Psoas muscle (tissue), 8 donors: ENCODE measurements at regions of chr5 and their contacts with region 1.

Region 1: DNA sequence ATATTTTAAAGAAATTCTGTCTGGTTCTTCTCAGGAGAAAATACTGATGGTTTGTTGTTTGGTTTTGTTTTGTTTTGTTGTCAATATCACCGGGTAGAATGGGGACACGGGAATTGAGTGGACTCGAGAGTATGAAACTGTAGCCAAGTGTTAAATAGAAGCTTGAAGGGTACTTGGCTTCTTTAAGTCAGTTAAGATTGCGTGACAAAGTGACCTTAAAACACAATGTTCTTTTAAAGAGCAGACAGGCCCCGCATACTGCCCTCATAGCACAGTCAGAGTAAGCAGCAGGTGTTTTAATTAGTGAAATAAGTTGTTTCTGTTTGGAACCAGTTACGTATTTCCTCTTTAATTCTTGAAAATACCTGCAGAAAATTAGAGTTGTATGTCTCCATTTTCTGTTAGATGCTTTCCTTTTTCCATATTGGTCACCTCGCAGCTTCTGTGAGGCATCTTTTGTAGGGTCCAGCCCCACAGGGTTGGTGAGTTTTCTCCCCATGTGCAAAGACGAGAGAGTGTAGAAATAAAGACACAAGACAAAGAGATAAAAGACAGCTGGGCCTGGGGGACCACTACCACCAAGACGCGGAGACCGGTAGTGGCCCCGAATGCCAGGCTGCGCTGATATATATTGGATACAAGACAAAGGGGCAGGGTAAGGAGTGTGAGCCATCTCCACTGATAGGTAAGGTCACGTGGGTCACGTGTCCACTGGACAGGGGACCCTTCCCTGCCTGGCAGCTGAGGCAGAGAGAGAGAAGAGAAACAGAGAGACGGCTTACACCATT is 9.6 kb downstream of the TRIP13 start:
- DNase-seq: no peak
- ATAC-seq: no peak
- H3K4me3 ChIP-seq: no peak overlapping the region
- H3K27ac ChIP-seq: peak overlapping the region; percentile 21
- H3K4me1 ChIP-seq: no peaks in the 10 kb centered on the region
- H3K27me3 ChIP-seq: no peaks in the 10 kb centered on the region
- CTCF ChIP-seq: no peak

Region 2: GRCh38 chr5:442335-443238 is 459.7 kb before region 1 on chr5 and contains the start of gene EXOC3:
- intact Hi-C with region 1: loop called in 1 of 2 experiments (anchors 10 kb)
- DNase-seq: peak; percentile 79 to 88
- ATAC-seq: peak; percentile 89 to 98 (median 96)
- H3K4me3 ChIP-seq: peak within 1 kb of the TSS; percentile 88
- H3K27ac ChIP-seq: peak within 1 kb of the TSS; percentile 87
- H3K4me1 ChIP-seq: peaks cover 17% of the 10 kb centered on the region
- H3K27me3 ChIP-seq: peaks cover 0 to under 1% (median 0%) of the 10 kb centered on the region in 3 donors
- CTCF ChIP-seq: no peak
- total RNA-seq, gene EXOC3: 55.8 to 62.7 (median 59.1) TPM

Region 3: DNA sequence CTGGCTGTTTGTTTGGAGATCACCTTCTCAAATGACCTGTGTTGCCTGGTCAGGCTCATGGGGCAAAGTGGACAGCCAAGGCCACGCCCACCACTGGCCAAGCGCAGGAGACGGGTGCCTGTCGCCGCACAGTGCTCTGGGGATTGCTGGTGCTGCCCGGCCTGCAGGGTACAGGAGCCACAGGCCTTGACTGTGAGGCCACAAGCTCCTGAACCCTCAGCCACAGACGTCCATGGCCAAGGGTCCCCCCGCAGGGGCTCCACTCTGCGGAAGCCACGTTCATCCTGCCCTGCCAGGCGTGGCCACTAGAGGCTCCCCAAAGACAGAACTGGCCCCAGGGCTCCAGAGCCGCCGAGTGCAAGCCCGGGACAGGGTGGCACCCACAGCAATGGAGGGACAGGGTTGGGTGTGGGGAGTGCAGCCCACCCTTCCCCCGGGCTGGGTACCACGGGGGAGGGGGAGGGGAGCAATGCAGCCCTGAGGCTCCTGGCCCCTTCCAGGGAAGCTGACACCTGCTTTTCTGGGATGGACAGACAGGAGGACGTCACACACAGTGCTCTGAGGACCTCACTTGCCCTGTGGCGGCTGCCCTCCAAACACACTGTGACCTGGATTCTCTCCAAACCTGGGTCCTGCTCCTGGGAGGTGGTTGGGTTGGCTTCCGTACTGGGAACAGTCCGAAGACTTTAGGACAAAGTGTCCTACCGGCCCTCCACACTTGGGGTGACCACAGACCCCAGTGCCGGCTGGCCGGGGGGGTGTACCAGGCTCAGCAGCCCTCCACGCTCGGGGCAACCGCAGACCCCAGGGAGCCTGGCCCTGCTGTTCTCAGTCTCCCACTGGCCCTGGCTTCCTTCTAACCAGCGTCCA is 230.6 kb before region 1 on chr5:
- intact Hi-C with region 1: loop called (anchors 2 kb)
- DNase-seq: peak; percentile 79 to 89
- ATAC-seq: peak; percentile 77 to 86 (median 80)
- H3K4me3 ChIP-seq: peak overlapping the region; percentile 16
- H3K27ac ChIP-seq: no peak overlapping the region
- H3K4me1 ChIP-seq: peaks cover 36% of the 10 kb centered on the region
- H3K27me3 ChIP-seq: no peaks in the 10 kb centered on the region
- CTCF ChIP-seq: peak; percentile 95

Region 4: DNA sequence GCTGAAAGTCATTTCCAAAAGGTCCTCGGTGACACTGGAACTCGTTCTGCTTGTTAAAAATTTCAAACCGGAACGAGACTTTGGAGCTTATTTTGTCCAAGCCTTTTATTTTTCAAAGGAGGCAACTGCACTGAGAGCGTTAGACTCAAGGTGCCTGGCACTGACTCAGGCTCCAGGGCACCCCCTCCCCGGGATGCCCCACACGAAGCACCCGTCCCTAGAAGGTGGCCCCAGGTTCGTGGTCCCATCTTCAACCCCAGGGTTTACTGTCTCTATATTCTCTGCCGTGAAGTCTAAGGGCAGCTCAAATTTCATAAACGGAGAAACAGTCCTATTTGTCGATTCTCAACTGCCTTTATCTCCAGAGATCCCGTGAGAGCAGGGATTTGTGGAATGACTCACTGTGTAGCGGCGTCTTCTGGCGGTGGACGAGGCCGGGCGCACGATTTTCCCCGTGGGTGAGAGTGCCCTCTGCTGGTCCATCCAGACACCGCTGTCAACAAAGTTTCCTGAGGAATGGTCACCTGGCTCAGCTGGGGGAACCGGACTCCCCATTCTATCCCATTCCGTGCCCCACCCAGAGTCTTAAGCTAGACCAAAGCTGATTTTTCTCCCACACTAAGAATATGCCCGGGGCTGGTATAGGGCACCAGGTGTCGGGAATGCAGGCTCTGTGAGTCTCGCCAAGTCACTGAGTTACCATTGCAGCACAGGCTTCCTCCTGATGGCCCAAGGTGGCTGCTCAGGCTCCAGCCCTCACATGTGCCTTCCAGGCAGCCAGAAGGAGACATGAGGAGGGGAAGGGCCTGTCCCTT is 272.0 kb after region 1 on chr5:
- intact Hi-C with region 1: no loop called
- DNase-seq: peak; percentile 65 to 77
- ATAC-seq: peak; percentile 75 to 86 (median 85)
- H3K4me3 ChIP-seq: no peak overlapping the region
- H3K27ac ChIP-seq: no peak overlapping the region
- H3K4me1 ChIP-seq: no peaks in the 10 kb centered on the region
- H3K27me3 ChIP-seq: peaks cover 0 to 16% (median 1%) of the 10 kb centered on the region in 3 donors
- CTCF ChIP-seq: peak; percentile 64

Region 5: DNA sequence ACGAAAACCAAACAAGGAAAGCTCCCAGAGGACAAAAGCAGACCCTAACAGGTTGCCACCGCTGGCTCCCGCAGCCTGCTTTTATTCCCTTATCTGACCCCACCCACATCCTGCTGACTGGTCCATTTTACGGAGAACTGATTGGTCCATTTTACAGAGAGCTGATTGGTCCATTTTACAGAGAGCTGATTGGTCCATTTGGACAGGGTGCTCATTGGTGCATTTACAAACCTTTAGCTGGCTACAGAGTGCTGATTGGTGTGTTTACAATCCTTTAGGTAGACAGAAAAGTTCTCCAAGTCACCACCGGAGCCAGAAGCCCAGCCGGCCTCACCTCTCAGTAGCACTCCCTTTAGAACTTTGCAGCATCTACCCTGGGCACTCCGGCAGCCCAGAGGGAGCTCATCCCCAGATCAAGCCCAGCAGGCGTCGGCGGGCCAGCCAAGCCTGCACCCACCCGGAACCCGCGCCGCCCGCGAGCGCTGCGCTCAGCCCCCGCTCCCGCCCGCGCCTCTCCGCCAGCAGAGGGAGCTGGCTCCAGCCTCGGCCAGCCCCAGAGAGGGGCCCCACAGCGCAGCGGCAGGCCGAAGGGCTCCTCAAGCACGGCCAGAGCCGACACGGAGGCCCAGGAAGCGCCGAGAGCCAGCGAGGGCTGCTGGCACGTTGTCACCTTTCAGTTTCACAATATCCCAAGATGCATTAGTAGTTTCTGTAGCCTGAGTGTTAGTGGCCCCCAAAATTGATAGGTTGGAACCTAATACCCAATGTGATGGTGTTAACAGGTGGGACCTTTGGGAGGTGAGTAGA is 477.9 kb after region 1 on chr5:
- intact Hi-C with region 1: no loop called
- DNase-seq: peak; percentile 52 to 66
- ATAC-seq: peak; percentile 48 to 77 (median 71)
- H3K4me3 ChIP-seq: peak overlapping the region; percentile 21
- H3K27ac ChIP-seq: no peak overlapping the region
- H3K4me1 ChIP-seq: no peaks in the 10 kb centered on the region
- H3K27me3 ChIP-seq: peaks cover 0 to 45% (median 15%) of the 10 kb centered on the region in 3 donors
- CTCF ChIP-seq: peak; percentile 51